Activated T-helper 2 cell treated with anti-CD3 and anti-CD28 coated beads, Interferon-gamma antibody, Interleukin-2, Interleukin-4, amounts not matched to agents 10 μg/mL and 5 μg/mL and 100 μg/mL, durations not matched to agents 14 hours and 24 hours and 36 hours (primary cell): ENCODE measurements at regions of chr6 and their contacts with region 1.

Region 1: DNA sequence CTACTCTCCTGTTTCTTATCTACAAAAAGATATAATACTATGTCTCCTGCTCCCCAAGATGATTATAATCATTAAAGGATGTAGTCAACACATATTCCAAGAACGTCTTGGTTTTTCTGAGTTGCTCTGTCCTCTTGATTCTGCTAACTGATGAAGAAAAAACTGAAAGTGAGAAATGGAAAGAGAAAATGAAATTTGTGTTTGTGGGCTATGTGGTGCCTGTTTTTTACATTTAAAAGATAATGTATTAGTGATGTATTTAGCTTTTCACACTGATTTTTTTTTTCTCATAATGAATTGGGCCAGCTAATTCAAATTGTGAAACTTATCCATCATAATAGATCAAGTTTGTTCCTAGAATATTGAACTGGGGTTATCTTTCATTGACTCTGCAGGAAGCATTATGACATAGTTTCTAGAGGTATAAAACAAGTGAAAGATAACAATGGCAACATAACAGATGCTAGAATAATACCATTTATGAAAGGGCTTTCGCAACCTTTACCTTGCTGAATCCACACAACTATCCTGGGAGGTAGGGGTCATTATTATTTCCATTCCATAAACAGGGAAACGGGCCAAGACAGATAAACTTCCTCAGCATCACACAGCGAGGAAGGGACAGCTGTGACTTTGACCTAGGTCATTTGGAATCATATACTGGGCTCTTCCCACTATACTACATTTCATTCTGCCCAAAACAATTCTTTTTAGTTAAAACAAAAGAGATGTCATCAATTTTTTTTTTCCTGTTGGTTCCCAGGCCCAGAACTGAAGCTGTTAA is 336.7 kb downstream of the GJA1 start:
- DNase-seq: no peak
- H3K4me3 Mint-ChIP-seq: no peak overlapping the region
- H3K27ac Mint-ChIP-seq: peak overlapping the region; percentile 80
- H3K4me1 Mint-ChIP-seq: peaks cover 29% of the 10 kb centered on the region
- H3K27me3 Mint-ChIP-seq: peaks cover 1% of the 10 kb centered on the region

Region 2: DNA sequence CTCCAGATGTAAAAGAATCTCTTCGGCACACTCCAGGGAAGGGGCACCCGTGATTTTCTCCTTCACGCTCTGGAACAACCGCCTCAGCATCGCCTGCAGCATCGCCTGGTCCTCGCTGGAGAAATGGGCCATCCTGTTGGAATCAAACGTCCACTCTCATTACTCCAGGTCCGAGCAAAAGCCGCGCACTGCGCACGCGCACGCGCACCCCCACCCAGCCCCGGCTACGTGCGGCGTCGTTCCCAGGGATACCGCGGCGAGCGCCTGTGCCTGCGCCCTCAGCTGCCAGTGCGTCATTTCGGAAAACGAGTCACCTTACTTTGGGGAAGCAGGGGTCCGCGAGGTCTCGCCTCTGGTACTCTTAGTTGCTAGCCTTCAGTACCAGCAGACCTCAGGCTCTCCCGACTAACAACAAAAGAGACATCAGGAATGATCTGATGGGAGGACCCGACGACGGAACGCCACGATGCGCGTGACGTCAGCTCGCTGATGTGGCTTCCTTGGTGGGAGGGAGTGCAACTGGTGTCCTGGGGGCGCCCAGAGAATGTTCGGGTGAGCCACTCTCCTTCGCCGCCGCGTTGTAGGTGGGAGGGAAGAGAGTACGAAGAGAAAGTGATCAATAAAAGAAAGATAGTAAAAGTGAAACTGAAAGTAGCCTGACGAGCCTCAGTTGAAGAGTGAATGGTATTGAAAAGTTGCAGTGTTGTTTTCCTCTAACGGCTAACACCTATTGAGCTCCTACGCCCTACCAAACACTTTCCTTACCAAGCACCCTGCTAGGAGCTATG is 437.6 kb before region 1 on chr6 and contains the start of gene TBC1D32:
- intact Hi-C with region 1: loop called (anchors 1 kb)
- DNase-seq: peak; percentile 84
- H3K4me3 Mint-ChIP-seq: peak within 1 kb of the TSS; percentile 95
- H3K27ac Mint-ChIP-seq: peak within 1 kb of the TSS; percentile 99
- H3K4me1 Mint-ChIP-seq: peaks cover 32% of the 10 kb centered on the region
- H3K27me3 Mint-ChIP-seq: peaks cover 5% of the 10 kb centered on the region
- total RNA-seq, gene TBC1D32: 6.6 and 8.3 TPM in 2 replicates

Region 3: GRCh38 chr6:121652726-121653623 is 119.2 kb before region 1 on chr6:
- intact Hi-C with region 1: loop called (anchors 2 kb)
- DNase-seq: no peak
- H3K4me3 Mint-ChIP-seq: no peak overlapping the region
- H3K27ac Mint-ChIP-seq: no peak overlapping the region
- H3K4me1 Mint-ChIP-seq: peaks cover 33% of the 10 kb centered on the region
- H3K27me3 Mint-ChIP-seq: no peaks in the 10 kb centered on the region

Region 4: GRCh38 chr6:121678245-121678644 is 93.9 kb before region 1 on chr6:
- intact Hi-C with region 1: loop called (anchors 5 kb)
- DNase-seq: no peak
- H3K4me3 Mint-ChIP-seq: no peak overlapping the region
- H3K27ac Mint-ChIP-seq: no peak overlapping the region
- H3K4me1 Mint-ChIP-seq: peaks cover 10% of the 10 kb centered on the region
- H3K27me3 Mint-ChIP-seq: no peaks in the 10 kb centered on the region

Region 5: DNA sequence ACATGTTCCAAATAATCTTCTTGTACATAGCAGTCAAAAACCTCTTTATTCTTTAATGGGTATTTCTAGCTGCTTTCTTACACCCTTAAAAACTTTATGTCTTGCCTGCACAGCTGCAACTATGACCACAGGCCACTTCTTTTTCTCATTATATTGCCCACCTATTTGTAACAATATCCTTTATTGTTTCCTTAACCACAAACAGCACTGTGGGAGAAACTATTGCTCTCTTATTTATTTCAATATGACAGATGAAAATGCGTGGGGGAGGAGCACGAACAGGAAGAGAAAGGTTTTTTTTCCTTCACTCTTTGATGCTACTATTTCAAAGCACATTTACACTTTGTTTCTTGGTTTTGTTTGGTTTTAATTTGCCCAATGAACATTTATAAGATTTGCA is 83.2 kb before region 1 on chr6:
- intact Hi-C with region 1: loop called (anchors 1 kb)
- DNase-seq: no peak
- H3K4me3 Mint-ChIP-seq: no peak overlapping the region
- H3K27ac Mint-ChIP-seq: no peak overlapping the region
- H3K4me1 Mint-ChIP-seq: peaks cover 14% of the 10 kb centered on the region
- H3K27me3 Mint-ChIP-seq: peaks cover 1% of the 10 kb centered on the region

Region 6: DNA sequence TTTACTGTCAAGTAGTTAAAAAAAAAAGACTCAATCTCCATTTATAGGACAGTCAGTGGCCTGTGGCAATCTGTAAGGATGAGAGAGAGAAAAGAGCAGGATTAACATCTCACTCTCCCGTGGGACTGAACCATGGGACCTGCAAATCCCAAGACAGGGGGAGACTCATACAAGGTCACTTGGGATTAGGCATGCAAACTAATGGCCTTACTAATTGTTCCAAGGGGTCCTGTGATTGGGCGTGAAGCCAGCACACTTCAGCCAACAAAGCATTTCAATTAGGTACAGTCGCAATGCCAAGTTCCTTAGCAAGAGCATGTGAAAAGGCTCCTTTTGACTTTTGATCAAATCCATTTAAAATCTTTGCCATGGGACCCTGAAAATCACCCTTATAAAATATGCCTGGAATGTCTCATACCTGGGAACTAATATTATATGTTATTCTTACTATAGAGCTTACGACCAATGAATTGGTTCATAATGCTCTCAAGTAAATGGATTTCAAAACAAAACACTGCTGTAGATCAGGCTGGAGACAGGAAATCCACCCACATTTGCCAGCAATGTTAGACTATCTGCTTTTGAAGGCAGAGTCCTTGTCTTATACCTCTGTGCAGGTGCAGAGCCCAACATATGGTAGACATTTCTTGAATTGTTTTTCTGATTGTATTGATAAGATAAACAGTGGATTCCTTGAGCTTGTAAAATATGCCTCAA is 75.8 kb after region 1 on chr6:
- intact Hi-C with region 1: no loop called
- DNase-seq: no peak
- H3K4me3 Mint-ChIP-seq: no peak overlapping the region
- H3K27ac Mint-ChIP-seq: no peak overlapping the region
- H3K4me1 Mint-ChIP-seq: no peaks in the 10 kb centered on the region
- H3K27me3 Mint-ChIP-seq: no peaks in the 10 kb centered on the region